ENCODE measurements at regions of chr18 and their contacts with region 1.

Region 1: DNA sequence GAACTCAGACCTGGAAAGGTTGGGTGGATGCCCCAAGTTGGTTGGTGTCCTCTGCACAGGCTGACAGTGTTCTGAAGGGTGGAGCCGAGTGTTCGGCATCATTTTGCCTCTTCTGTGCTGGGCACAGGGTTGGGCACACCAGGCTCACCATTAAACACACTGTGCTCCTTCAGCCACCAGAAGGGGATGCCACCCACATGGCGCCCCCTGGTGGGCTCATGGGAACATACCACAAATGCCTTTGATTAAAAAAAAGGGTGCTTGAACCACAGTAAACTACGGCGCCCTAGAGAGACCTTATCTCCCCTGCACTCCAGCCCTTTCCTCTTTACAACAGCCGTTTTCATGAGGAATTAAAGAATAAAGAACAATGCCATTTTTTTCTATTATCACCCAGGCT is 89.4 kb downstream of the CELF4 start:
- DNase-seq: peak in 1 of 2 experiments; percentile 79
- H3K4me3 ChIP-seq: no peak overlapping the region
- H3K27ac ChIP-seq: no peak overlapping the region
- H3K4me1 ChIP-seq: peaks cover 0 to 6% (median 0%) of the 10 kb centered on the region in 4 experiments; a peak in 2 of 7 replicates
- H3K27me3 ChIP-seq: no peaks in the 10 kb centered on the region
- CTCF ChIP-seq: peak; percentile 69 to 94 (median 75)
- EP300 ChIP-seq: no peak
- POLR2A ChIP-seq: no peak
- RAD21 ChIP-seq: peak; percentile 71 to 79

Region 2: DNA sequence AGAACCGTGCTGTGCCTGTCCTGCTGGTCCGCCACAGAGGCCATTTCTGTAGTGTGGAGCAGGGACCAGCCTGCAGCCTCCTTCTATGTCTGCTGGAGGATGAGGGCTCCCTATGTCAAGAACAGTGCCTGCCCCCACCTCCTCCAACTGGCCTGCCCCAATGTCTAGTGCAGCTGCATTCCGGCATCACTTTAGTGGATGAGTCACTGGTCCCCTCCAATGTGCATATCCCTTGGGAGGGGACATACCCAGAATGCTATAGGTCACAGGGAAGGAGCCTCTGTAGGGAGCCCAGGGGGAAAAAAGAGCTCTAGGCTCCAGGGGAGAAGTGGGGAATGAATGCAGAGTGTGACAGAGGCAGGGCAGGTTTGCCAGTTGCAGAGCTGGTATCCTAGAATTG is 130.1 kb before region 1 on chr18:
- CTCF ChIA-PET with region 1: interaction called, 21 read pairs
- POLR2A ChIA-PET with region 1: no interaction called
- DNase-seq: no peak
- H3K4me3 ChIP-seq: no peak overlapping the region
- H3K27ac ChIP-seq: no peak overlapping the region
- H3K4me1 ChIP-seq: peaks cover 0 to 5% (median 2%) of the 10 kb centered on the region in 4 experiments; a peak in 6 of 7 replicates
- H3K27me3 ChIP-seq: peaks cover 0 to 3% (median 0%) of the 10 kb centered on the region in 4 experiments; a peak in 1 of 7 replicates
- CTCF ChIP-seq: no peak
- EP300 ChIP-seq: no peak
- POLR2A ChIP-seq: no peak
- RAD21 ChIP-seq: no peak

Region 3: DNA sequence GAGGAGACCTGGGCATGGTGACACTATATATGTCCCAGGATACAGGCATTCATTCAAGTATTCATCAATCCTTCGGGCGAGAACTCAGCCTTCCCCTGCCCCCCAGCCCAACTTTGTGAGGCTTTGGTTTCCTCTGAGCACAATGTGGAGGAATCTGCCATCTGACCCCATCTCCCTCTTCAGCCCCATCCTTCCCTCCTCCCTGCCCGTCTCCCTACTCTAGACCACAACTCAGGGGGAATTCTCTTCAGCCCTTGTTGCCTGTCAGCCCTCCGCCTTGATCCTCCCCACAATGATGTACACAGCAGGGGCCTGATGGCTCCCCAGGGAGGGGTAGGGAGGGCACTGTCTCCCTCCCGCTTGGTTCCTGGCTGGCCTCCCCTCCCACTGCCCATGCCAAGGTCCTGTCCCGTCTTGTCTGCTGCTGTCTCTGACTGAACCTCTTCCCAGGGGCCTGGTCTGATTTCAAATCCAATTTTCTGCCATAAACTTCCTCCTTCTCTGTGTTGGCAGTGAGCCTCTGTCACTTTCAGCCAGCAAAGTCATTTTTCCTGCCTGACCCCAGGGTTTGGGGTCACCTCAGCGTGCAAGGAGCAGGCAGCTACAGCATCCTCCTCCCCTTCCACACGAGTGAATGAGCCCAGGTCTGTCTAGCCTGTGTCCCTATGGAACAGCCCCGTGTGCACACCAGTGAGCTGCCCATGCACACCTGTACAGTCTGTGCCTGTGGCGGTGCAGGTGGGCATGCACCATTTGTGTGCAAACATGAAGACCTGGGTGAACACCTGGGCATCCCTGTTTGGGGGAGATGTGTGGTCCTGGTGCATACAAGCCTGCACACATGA is 107.8 kb before region 1 on chr18:
- CTCF ChIA-PET with region 1: no interaction called
- POLR2A ChIA-PET with region 1: no interaction called
- DNase-seq: no peak
- H3K4me3 ChIP-seq: no peak overlapping the region
- H3K27ac ChIP-seq: no peak overlapping the region
- H3K4me1 ChIP-seq: peaks cover 0 to 13% (median 6%) of the 10 kb centered on the region in 4 experiments; a peak in 6 of 7 replicates
- H3K27me3 ChIP-seq: peaks cover 11 to 30% (median 24%) of the 10 kb centered on the region in 4 experiments
- CTCF ChIP-seq: no peak
- EP300 ChIP-seq: no peak
- POLR2A ChIP-seq: no peak
- RAD21 ChIP-seq: no peak

Region 4: DNA sequence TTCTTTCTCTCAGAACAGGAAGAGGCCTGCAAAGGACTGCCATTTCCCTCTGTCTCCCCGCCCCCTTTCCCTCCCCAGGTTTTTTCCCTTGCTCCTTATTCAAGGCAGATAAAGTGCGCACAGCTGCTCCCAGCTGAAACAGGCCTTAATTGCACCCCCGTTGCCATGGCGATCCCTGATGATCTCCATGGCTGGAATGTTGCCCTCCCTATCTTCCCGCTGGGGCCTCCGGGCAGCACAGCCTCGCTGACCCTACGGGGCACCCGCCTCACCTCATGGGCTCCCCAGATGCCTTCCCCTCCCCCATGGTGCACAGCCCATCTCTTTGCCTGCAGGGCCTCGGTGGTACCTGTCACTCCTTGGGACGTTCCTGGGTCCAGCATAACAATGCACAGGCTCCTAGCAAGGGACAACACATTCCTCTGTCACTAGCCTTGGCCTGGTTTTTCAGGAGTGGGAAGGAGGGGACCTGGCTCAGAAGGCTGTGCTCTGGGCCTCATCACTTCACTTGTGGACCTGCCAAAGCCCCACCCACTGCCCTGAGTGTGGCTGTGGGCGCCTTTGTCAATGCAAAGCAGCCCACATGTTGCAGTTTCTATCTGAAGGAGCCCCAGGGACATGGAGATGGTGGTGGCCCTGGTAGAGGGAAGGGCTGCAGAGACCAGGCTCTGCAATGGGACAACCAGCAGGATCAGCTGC is 25.6 kb before region 1 on chr18:
- CTCF ChIA-PET with region 1: interaction called, 144 read pairs
- POLR2A ChIA-PET with region 1: interaction called, 3 read pairs
- DNase-seq: peak; percentile 46 to 74
- H3K4me3 ChIP-seq: peak overlapping the region in 1 of 4 experiments; percentile 18; a peak in 1 of 8 replicates
- H3K27ac ChIP-seq: 0 out of 2 replicates have a peak overlapping the region, but pooled peaks have one; percentile 18
- H3K4me1 ChIP-seq: peaks cover 8 to 16% (median 10%) of the 10 kb centered on the region in 4 experiments
- H3K27me3 ChIP-seq: peaks cover 0 to 3% (median 0%) of the 10 kb centered on the region in 4 experiments; a peak in 2 of 7 replicates
- CTCF ChIP-seq: no peak
- EP300 ChIP-seq: peak in 1 of 2 experiments; percentile 61; a peak in 1 of 3 replicates
- POLR2A ChIP-seq: no peak
- RAD21 ChIP-seq: no peak

Region 5: DNA sequence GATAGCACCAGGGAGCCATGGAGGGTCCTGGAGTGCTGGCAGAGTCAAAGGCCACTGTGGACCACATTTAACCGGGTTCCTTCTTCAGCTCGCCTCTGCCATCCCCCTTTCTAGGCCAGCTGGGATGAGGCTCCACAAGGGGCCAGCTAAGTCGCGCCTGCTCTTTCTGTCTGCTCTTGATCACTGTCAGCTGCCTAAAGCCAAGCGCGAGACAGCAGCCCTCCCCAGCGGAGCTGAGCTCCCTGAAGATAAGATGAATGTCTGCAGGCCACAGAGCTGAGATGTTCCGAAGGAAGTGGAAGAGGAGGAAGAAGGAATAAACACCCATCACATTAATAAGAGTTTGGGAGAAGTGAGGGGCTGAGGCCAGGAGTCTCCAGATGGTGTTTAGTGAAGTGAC is 10.2 kb before region 1 on chr18:
- CTCF ChIA-PET with region 1: interaction called, 33 read pairs
- POLR2A ChIA-PET with region 1: interaction called, 3 read pairs
- DNase-seq: no peak
- H3K4me3 ChIP-seq: no peak overlapping the region
- H3K27ac ChIP-seq: no peak overlapping the region
- H3K4me1 ChIP-seq: no peaks in the 10 kb centered on the region; a peak in 1 of 7 replicates
- H3K27me3 ChIP-seq: no peaks in the 10 kb centered on the region
- CTCF ChIP-seq: no peak
- EP300 ChIP-seq: no peak
- POLR2A ChIP-seq: no peak
- RAD21 ChIP-seq: no peak

Region 6: DNA sequence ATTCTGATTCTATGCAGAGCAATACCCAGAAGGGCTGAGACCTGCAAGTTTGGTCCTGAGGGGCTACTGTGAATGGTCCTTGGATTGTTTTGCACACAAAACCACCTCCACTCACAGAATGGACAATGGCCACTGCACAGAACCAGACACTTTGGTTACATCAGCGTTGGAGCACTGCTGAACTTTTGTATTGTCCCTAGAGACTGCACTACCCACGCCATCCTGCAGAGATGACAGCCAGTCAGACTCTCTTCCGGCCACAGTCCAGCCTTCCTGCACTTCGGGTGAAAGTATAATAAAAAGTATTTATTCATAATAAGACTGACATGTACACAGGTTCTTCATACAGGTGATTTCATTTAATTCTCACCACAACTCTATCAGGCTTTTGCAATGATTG is 53.7 kb after region 1 on chr18:
- CTCF ChIA-PET with region 1: interaction called, 93 read pairs
- POLR2A ChIA-PET with region 1: no interaction called
- DNase-seq: no peak
- H3K4me3 ChIP-seq: no peak overlapping the region
- H3K27ac ChIP-seq: no peak overlapping the region
- H3K4me1 ChIP-seq: peaks cover 7 to 15% (median 9%) of the 10 kb centered on the region in 4 experiments
- H3K27me3 ChIP-seq: peaks cover 0 to 4% (median under 1%) of the 10 kb centered on the region in 4 experiments; a peak in 5 of 7 replicates
- CTCF ChIP-seq: no peak
- EP300 ChIP-seq: no peak
- POLR2A ChIP-seq: no peak
- RAD21 ChIP-seq: no peak

Region 7: DNA sequence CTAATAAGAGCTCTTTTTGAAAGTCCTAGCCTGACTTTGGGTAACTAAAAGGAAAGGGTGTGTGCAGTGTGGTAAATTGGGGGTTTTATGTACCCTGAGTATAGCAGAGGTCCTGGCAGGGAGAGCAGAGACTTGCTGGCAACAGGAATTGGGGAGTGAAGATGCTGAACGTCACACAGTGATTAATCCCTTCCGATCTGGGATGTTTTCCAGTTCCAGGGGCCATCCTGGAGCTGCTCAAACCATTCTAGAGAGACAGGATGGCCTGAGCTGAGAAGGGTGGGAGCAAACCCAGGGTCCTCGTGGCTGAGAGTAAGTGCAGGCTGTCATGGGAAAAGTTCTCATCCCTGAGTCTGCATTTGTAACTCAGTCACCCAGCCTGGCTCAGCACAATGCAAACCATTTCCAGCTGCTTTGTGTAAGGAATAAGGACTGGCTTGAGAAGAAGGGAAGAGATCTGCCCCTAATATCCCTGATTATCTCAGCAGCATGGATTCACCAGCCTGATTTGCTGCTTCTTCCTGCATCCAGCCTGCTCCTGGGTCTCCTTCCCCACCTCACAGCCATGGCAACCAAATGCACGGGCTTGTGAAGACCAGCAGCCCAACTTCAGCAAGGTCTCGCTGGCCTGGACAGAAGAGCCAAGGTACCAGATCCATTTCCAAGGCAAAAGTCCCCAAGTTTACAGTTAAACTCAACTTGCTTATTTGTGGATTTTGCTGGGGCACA is 136.5 kb after region 1 on chr18:
- CTCF ChIA-PET with region 1: no interaction called
- POLR2A ChIA-PET with region 1: no interaction called
- DNase-seq: peak in 1 of 2 experiments; percentile 30
- H3K4me3 ChIP-seq: no peak overlapping the region
- H3K27ac ChIP-seq: no peak overlapping the region
- H3K4me1 ChIP-seq: no peaks in the 10 kb centered on the region; a peak in 1 of 7 replicates
- H3K27me3 ChIP-seq: peaks cover 0 to 2% (median 0%) of the 10 kb centered on the region in 4 experiments; a peak in 1 of 7 replicates
- CTCF ChIP-seq: no peak
- EP300 ChIP-seq: no peak
- POLR2A ChIP-seq: no peak
- RAD21 ChIP-seq: no peak